ENCODE measurements at regions of chr12 and their contacts with region 1.

Region 1: DNA sequence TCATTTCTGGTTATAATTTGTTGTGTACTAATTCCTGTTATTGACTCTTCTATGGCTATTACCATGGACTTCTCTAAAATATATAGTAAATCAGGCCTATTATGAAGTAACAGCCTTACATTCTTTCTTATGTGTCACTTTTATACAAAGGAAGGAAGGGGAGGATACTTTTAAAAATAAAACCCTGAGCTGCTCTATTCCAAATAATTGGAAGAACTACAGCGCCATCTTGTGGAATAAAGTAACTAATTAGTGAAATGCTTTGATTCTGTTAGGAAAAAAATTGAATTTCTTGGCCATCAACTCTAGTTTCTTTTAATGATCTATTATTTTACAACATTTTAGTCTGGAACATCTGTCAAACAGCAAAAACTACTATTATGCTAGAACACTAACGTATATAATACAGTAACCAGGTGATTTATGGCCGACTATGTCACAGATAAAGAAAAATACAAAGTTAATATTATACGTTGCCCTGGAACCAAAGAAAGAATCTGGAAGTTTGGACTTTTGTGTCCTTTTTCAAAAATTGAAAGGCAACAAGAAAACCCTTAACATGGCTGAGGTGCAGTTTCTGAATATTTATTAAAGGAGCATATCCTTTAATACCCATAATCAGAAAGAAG is 55.0 kb upstream of the NELL2 start:
- DNase-seq: peak; percentile 40
- ATAC-seq: peak; percentile 72
- H3K4me3 ChIP-seq: no peak overlapping the region
- H3K27ac ChIP-seq: no peak overlapping the region
- H3K4me1 ChIP-seq: no peaks in the 10 kb centered on the region
- H3K27me3 ChIP-seq: no peaks in the 10 kb centered on the region
- CTCF ChIP-seq: peak; percentile 24 to 71 (median 62); a peak in 4 of 6 replicates
- POLR2A ChIP-seq: no peak
- RAD21 ChIP-seq: peak; percentile 73

Region 2: GRCh38 chr12:43957732-43958372 is 973.2 kb before region 1 on chr12:
- CTCF ChIA-PET with region 1: interaction called, 5 read pairs
- POLR2A ChIA-PET with region 1: no interaction called
- RAD21 ChIA-PET with region 1: no interaction called
- intact Hi-C with region 1: loop called (anchors 1 kb)
- DNase-seq: peak; percentile 37
- ATAC-seq: peak; percentile 88
- H3K4me3 ChIP-seq: no peak overlapping the region
- H3K27ac ChIP-seq: no peak overlapping the region
- H3K4me1 ChIP-seq: no peaks in the 10 kb centered on the region
- H3K27me3 ChIP-seq: no peaks in the 10 kb centered on the region
- CTCF ChIP-seq: peak; percentile 47 to 63 (median 59)
- POLR2A ChIP-seq: no peak
- RAD21 ChIP-seq: peak; percentile 69

Region 3: DNA sequence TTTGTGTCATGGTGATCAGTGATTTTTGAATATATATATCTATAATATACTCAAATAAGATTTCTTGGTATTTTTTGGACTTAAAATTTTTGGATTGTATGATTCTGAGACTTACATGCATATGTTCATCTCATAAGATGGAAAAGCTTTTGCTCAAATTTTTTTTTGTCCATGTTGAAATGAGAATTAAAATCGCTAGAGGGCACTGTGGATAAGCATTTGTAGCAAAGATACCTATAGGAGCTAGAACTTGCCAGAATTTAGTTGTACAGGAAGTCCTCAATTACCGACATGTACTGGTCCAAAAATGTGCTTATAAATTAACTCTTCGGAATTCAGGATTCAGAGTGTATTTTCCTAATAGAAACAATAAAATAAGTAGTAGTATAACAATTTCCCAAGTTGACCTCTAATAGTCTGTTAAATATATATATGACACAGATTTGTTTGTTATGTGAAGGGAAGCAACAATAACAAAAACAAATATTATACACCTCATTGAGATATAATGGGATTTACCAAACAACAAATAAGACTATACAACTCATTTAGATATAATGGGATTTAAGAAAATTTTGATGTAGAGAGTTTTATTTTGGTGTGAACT is 915.6 kb before region 1 on chr12:
- CTCF ChIA-PET with region 1: interaction called, 35 read pairs
- POLR2A ChIA-PET with region 1: no interaction called
- RAD21 ChIA-PET with region 1: interaction called, 3 to 4 read pairs
- intact Hi-C with region 1: loop called (anchors 1 kb)
- DNase-seq: peak; percentile 34
- ATAC-seq: peak; percentile 54
- H3K4me3 ChIP-seq: no peak overlapping the region
- H3K27ac ChIP-seq: no peak overlapping the region
- H3K4me1 ChIP-seq: no peaks in the 10 kb centered on the region
- H3K27me3 ChIP-seq: no peaks in the 10 kb centered on the region
- CTCF ChIP-seq: peak; percentile 42 to 63 (median 53); a peak in 5 of 6 replicates
- POLR2A ChIP-seq: no peak
- RAD21 ChIP-seq: peak; percentile 73

Region 4: DNA sequence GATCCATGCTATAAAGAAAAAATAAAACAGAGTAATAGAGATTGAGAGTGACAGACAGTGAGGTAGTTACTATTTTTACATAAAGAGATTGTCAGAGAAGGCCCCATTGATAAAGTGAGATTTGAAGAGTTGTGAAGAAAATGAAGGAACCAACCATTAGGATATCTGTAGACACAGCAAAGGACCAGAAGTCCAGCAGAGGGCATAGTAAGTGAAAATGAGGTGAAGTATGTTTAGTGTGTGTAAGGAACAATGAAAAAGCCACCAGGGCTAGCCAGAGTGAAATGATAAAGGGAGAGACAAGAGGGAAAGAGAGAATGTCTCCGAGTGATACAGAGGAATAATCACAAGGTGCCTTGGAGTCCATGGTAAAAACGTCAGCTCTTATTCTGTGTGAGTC is 465.9 kb before region 1 on chr12:
- CTCF ChIA-PET with region 1: interaction called, 3 read pairs
- POLR2A ChIA-PET with region 1: no interaction called
- RAD21 ChIA-PET with region 1: no interaction called
- intact Hi-C with region 1: loop called (anchors 10 kb)
- DNase-seq: peak; percentile 3
- ATAC-seq: peak; percentile 74
- H3K4me3 ChIP-seq: no peak overlapping the region
- H3K27ac ChIP-seq: no peak overlapping the region
- H3K4me1 ChIP-seq: no peaks in the 10 kb centered on the region
- H3K27me3 ChIP-seq: no peaks in the 10 kb centered on the region
- CTCF ChIP-seq: peak; percentile 17 to 39 (median 25); a peak in 5 of 6 replicates
- POLR2A ChIP-seq: no peak
- RAD21 ChIP-seq: peak; percentile 33; the same call in 1 of the 2 replicates

Region 5: GRCh38 chr12:44947163-44947562 is 16.1 kb after region 1 on chr12:
- CTCF ChIA-PET with region 1: interaction called, 16 read pairs
- POLR2A ChIA-PET with region 1: no interaction called
- RAD21 ChIA-PET with region 1: no interaction called
- intact Hi-C with region 1: no loop called
- DNase-seq: no peak
- ATAC-seq: no peak
- H3K4me3 ChIP-seq: no peak overlapping the region
- H3K27ac ChIP-seq: no peak overlapping the region
- H3K4me1 ChIP-seq: no peaks in the 10 kb centered on the region; a peak in 2 of 4 replicates
- H3K27me3 ChIP-seq: no peaks in the 10 kb centered on the region
- CTCF ChIP-seq: no peak
- POLR2A ChIP-seq: no peak
- RAD21 ChIP-seq: no peak